Right lobe of liver (tissue), 6 donors: ENCODE measurements at regions of chr4 and their contacts with region 1.

Region 1: DNA sequence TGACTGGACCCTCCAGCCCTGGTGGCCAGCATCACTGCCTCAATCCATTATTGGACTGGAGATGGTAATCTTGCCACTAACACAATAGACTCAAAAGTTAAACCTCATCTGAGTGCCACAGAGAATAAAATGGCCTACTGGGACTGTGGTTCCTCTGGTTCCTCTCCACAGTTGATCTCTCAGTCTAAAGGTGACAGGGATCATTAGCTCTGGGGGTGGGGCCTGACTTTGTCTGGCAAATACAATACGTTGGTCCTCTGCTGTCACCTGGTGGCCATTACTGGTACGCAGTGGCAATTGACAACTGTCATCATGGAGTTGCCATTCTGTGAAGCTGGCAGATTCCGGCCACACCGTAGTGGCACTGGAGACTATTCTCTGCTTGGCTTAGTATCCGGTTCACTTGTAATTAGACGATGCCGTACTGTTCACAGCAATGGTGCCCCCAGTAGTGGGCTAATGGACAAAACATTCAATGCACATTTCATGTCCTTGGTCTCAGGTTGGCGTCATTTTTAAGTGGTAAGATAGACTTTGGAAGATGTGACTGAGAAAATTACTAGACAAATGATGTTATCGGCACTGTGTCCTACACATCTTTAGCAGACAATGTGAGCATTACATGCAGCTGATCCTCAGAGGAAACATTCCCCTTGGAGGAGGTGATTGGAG is 6.7 kb downstream of the FGFBP2 start:
- DNase-seq: peak; percentile 79 to 89 (median 82)
- ATAC-seq: peak; percentile 100
- H3K4me3 ChIP-seq: no peak overlapping the region
- H3K27ac ChIP-seq: no peak overlapping the region
- H3K4me1 ChIP-seq: no peaks in the 10 kb centered on the region
- H3K27me3 ChIP-seq: no peaks in the 10 kb centered on the region
- CTCF ChIP-seq: peak; percentile 85 to 97 (median 96)
- POLR2A ChIP-seq: no peak

Region 2: DNA sequence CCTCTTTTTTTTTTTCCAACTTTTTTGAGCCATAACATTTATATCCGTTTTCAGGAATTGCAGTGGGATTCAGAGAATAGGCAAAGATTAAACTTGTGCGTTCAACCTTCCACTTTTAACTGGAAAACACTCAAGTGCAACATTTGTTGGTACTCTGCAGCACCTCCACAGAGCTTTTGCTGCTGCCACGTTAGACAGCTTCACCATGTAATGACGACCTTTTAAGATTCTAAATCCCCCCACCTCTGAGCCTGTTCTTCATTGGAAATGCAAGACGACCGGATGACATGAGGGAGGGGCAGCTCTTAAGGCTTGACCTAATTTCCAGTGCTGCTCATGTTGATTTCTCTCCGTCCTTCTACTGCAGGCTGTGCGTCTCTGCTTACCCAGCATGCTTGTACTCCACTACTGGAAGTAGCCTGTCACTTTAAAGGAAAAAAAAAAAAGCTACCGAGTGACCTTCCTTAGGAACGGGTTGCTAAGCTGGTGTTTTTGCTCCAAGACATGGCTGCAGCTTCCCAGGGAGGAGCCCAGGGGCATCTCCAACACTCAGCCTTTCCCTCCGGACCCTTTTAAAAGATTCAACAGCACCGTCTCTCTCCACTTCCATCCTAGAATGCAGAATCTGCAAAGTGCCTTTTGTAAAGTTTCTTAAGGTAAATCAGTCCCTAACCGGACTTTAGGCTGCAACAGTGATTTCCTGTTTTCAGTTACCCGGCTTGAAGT is 486.8 kb before region 1 on chr4 and contains the start of gene CC2D2A:
- intact Hi-C with region 1: loop called in 1 of 2 experiments (anchors 5 kb)
- DNase-seq: no peak
- ATAC-seq: peak; percentile 66 to 87 (median 73)
- H3K4me3 ChIP-seq: peak within 1 kb of the TSS; percentile 37 to 54 (median 41)
- H3K27ac ChIP-seq: peak within 1 kb of the TSS in 1 of 3 donors; percentile 14
- H3K4me1 ChIP-seq: no peaks in the 10 kb centered on the region
- H3K27me3 ChIP-seq: no peaks in the 10 kb centered on the region
- CTCF ChIP-seq: no peak
- POLR2A ChIP-seq: no peak
- total RNA-seq, gene CC2D2A: 1.7 to 6.5 (median 3.2) TPM

Region 3: GRCh38 chr4:15805583-15806517 is 150.5 kb before region 1 on chr4:
- intact Hi-C with region 1: loop called (anchors 10 kb)
- DNase-seq: no peak
- ATAC-seq: peak; percentile 82 to 88 (median 86)
- H3K4me3 ChIP-seq: no peak overlapping the region
- H3K27ac ChIP-seq: no peak overlapping the region
- H3K4me1 ChIP-seq: peaks cover 0 to 3% (median 0%) of the 10 kb centered on the region in 4 donors
- H3K27me3 ChIP-seq: no peaks in the 10 kb centered on the region
- CTCF ChIP-seq: peak; percentile 73 to 85 (median 78)
- POLR2A ChIP-seq: no peak

Region 4: DNA sequence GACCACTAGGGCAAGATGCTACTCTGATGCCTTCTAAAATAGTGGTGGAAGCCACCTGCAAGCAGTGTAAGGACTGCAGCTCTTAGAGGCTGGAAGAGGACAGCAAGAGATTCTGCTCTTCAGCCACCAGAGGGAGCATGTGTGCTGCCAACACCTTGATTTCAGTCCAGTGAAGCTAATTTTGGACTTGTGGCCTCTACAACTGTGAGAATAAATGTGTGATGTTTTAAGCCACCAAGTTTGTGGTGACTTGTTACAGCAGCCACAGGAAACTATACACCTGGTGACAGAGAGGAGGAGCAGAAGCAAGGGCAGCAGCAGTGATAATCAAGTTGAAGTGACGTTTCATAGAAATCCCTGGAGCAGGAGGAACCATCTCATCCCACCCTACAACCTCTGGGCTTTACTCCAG is 73.6 kb before region 1 on chr4:
- intact Hi-C with region 1: loop called (anchors 10 kb)
- DNase-seq: peak in 2 of 3 donors; percentile 28 to 62
- ATAC-seq: peak; percentile 97 to 98 (median 98)
- H3K4me3 ChIP-seq: no peak overlapping the region
- H3K27ac ChIP-seq: no peak overlapping the region
- H3K4me1 ChIP-seq: no peaks in the 10 kb centered on the region
- H3K27me3 ChIP-seq: no peaks in the 10 kb centered on the region
- CTCF ChIP-seq: peak; percentile 86 to 92 (median 90)
- POLR2A ChIP-seq: no peak